ENCODE measurements at regions of chr11 and their contacts with region 1.

Region 1: GRCh38 chr11:8006349-8006977 is 19.3 kb downstream of the EIF3F start:
- DNase-seq: peak; percentile 69
- CTCF ChIP-seq: peak; percentile 88

Region 2: GRCh38 chr11:8099291-8099899 is 92.9 kb after region 1 on chr11:
- in situ Hi-C with region 1: loop called (anchors 5 kb)
- DNase-seq: peak; percentile 76
- CTCF ChIP-seq: peak; percentile 88